ENCODE measurements at regions of chr19 and their contacts with region 1.

Region 1: DNA sequence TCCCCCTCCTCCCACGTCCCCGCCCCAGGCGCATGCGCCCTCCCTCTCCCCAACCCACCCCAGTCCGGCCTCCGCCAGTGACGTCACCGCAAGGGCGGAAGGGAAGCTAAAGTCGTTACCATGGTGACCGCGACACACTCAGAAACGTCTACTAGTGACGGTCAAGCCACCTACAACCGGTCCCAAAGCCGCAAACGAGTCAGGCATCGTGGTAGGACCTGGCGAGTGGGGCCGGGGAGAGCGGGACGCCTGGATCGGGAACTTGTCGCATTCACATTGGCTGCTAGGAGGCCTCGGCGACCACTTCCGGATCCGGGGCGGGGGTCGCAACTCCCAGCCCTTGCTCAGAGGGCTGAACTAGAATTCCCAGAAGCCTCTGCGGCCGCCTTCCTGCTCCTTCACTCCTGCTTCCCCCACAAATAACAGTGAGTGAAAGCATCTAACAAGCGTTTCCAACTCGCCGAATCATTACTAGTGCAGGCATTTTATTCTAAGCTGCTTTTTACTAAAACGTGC is at the start of gene ZSCAN5A:
- DNase-seq: peak; percentile 93 to 99 (median 99)
- ATAC-seq: peak; percentile 85
- H3K4me3 ChIP-seq: peak within 1 kb of the TSS; percentile 86
- H3K4me3 Mint-ChIP-seq: peak within 1 kb of the TSS; percentile 79 to 100 (median 96)
- H3K27ac ChIP-seq: peak within 1 kb of the TSS; percentile 97
- H3K27ac Mint-ChIP-seq: peak within 1 kb of the TSS; percentile 95 to 100 (median 99)
- H3K4me1 ChIP-seq: peaks cover 4 to 10% of the 10 kb centered on the region in 2 donors
- H3K4me1 Mint-ChIP-seq: peaks cover 13 to 41% (median 26%) of the 10 kb centered on the region in 7 donors
- H3K27me3 ChIP-seq: no peaks in the 10 kb centered on the region
- H3K27me3 Mint-ChIP-seq: no peaks in the 10 kb centered on the region
- total RNA-seq, gene ZSCAN5A: 8.0 to 15.4 (median 11.8) TPM

Region 2: GRCh38 chr19:55643348-55644176 is 671.1 kb before region 1 on chr19 and contains the start of gene ZNF581:
- CTCF ChIA-PET with region 1: no interaction called
- POLR2A ChIA-PET with region 1: no interaction called
- intact Hi-C with region 1: no loop called
- DNase-seq: peak; percentile 63 to 85 (median 81)
- ATAC-seq: peak; percentile 73
- H3K4me3 ChIP-seq: peak within 1 kb of the TSS; percentile 80
- H3K4me3 Mint-ChIP-seq: peak within 1 kb of the TSS; percentile 87 to 97 (median 94)
- H3K27ac ChIP-seq: peak within 1 kb of the TSS; percentile 80
- H3K27ac Mint-ChIP-seq: peak within 1 kb of the TSS; percentile 91 to 98 (median 96)
- H3K4me1 ChIP-seq: peaks cover 24 to 25% of the 10 kb centered on the region in 2 donors
- H3K4me1 Mint-ChIP-seq: peaks cover 23 to 63% (median 54%) of the 10 kb centered on the region in 7 donors
- H3K27me3 ChIP-seq: no peaks in the 10 kb centered on the region
- H3K27me3 Mint-ChIP-seq: no peaks in the 10 kb centered on the region
- total RNA-seq, gene ZNF581: 27.0 to 35.8 (median 32.1) TPM

Region 3: GRCh38 chr19:55653758-55654539 is 660.7 kb before region 1 on chr19:
- CTCF ChIA-PET with region 1: no interaction called
- POLR2A ChIA-PET with region 1: interaction called, 5 read pairs
- intact Hi-C with region 1: loop called in 1 of 2 experiments (anchors 10 kb)
- DNase-seq: peak; percentile 95 to 100 (median 100)
- ATAC-seq: peak; percentile 83
- H3K4me3 ChIP-seq: peak overlapping the region; percentile 98
- H3K4me3 Mint-ChIP-seq: peak overlapping the region; percentile 83 to 99 (median 96)
- H3K27ac ChIP-seq: peak overlapping the region; percentile 99
- H3K27ac Mint-ChIP-seq: peak overlapping the region; percentile 95 to 100 (median 99)
- H3K4me1 ChIP-seq: peaks cover 30 to 36% of the 10 kb centered on the region in 2 donors
- H3K4me1 Mint-ChIP-seq: peaks cover 29 to 55% (median 39%) of the 10 kb centered on the region in 7 donors
- H3K27me3 ChIP-seq: no peaks in the 10 kb centered on the region
- H3K27me3 Mint-ChIP-seq: peaks cover 0 to 2% (median 0%) of the 10 kb centered on the region in 5 donors

Region 4: DNA sequence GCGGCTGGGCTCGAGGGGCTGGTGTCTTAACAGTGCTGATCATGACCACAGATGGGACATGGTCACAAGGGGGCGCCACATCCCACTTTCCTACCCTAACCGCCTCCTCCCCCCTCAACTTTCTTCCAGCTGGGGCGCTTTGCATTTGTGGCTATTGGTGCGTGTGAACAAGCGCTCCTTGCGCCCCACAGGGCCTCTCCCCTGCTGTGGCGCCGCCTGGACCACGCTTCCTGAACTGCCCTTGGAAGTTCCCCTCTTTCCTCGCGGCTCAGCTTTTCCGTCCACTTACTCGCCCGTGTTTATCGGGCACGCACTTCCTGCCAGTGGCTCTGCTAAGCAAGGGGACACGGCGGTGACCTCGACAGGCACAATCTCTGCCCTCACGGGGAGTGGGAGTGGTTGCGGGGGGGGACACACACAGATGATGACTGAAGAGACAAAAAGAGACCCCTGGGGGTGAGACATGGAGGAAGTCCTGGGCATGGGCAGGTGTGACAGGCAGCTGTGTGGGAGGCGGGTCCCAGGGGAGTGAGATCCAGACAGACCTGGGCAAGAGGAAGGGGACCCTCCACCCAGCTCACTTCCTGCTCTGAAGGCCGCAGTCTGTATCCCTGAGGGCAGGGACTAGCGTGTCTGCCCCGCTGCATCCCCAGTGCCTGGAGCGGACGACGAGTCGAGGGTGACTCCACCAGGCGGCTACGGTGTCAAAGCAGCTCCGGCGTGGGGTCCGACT is 233.8 kb before region 1 on chr19:
- CTCF ChIA-PET with region 1: no interaction called
- POLR2A ChIA-PET with region 1: no interaction called
- intact Hi-C with region 1: loop called in 1 of 2 experiments (anchors 5 kb)
- DNase-seq: peak; percentile 22 to 69 (median 47)
- ATAC-seq: peak; percentile 81
- H3K4me3 ChIP-seq: peak overlapping the region; percentile 58
- H3K4me3 Mint-ChIP-seq: peak overlapping the region; percentile 70 to 89 (median 80)
- H3K27ac ChIP-seq: no peak overlapping the region
- H3K27ac Mint-ChIP-seq: peak overlapping the region in 1 of 9 donors; percentile 31
- H3K4me1 ChIP-seq: peaks cover 7 to 8% of the 10 kb centered on the region in 2 donors
- H3K4me1 Mint-ChIP-seq: peaks cover 8 to 11% (median 11%) of the 10 kb centered on the region in 7 donors
- H3K27me3 ChIP-seq: no peaks in the 10 kb centered on the region
- H3K27me3 Mint-ChIP-seq: peaks cover 4 to 13% (median 10%) of the 10 kb centered on the region in 5 donors

Region 5: GRCh38 chr19:56403764-56404704 is 89.4 kb after region 1 on chr19 and contains the start of gene ZNF583:
- CTCF ChIA-PET with region 1: no interaction called
- POLR2A ChIA-PET with region 1: interaction called, 5 read pairs
- intact Hi-C with region 1: loop called (anchors 1 to 2 kb)
- DNase-seq: peak; percentile 82 to 93 (median 90)
- ATAC-seq: peak; percentile 93
- H3K4me3 ChIP-seq: peak within 1 kb of the TSS; percentile 86
- H3K4me3 Mint-ChIP-seq: peak within 1 kb of the TSS; percentile 87 to 98 (median 94)
- H3K27ac ChIP-seq: peak within 1 kb of the TSS; percentile 96
- H3K27ac Mint-ChIP-seq: peak within 1 kb of the TSS; percentile 80 to 98 (median 95)
- H3K4me1 ChIP-seq: peaks cover 8 to 16% of the 10 kb centered on the region in 2 donors
- H3K4me1 Mint-ChIP-seq: peaks cover 19 to 37% (median 30%) of the 10 kb centered on the region in 7 donors
- H3K27me3 ChIP-seq: no peaks in the 10 kb centered on the region
- H3K27me3 Mint-ChIP-seq: no peaks in the 10 kb centered on the region
- total RNA-seq, gene ZNF583: 2.4 to 14.3 (median 3.1) TPM

Region 6: DNA sequence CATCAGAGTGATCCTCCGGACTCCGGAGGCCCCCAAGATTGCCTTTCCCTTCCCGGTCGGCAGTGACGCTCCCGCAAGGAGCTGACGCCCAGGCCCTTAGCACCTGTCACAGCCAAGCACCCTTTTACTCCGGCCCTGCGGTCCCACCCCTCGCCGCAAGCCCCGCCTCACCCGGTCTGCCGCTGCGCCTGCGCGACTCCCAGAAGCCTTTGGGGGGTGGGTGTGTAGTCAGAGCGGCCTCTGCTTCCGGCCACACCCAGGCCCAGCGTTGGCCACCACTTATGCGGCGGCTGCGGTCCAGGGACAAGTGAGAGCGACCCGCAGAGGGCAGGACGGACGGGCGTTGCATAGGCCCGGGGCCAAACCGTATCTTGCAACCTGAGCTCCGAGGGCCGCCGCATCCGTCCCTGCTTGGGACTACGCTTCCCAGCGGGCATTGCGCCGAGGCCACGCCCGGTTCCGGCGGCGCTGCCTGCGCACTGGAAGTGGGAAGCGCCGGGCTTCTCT is 223.7 kb after region 1 on chr19:
- CTCF ChIA-PET with region 1: no interaction called
- POLR2A ChIA-PET with region 1: no interaction called
- intact Hi-C with region 1: no loop called
- DNase-seq: peak; percentile 84 to 94 (median 89)
- ATAC-seq: peak; percentile 94
- H3K4me3 ChIP-seq: peak overlapping the region; percentile 87
- H3K4me3 Mint-ChIP-seq: peak overlapping the region; percentile 88 to 95 (median 93)
- H3K27ac ChIP-seq: peak overlapping the region; percentile 83
- H3K27ac Mint-ChIP-seq: peak overlapping the region; percentile 90 to 97 (median 94)
- H3K4me1 ChIP-seq: peaks cover 5% of the 10 kb centered on the region in 2 donors
- H3K4me1 Mint-ChIP-seq: peaks cover 13 to 27% (median 21%) of the 10 kb centered on the region in 7 donors
- H3K27me3 ChIP-seq: no peaks in the 10 kb centered on the region
- H3K27me3 Mint-ChIP-seq: peaks cover 0 to 4% (median 0%) of the 10 kb centered on the region in 5 donors

Region 7: GRCh38 chr19:57477191-57478008 is 1162.8 kb after region 1 on chr19 and contains the start of gene ZNF772:
- CTCF ChIA-PET with region 1: no interaction called
- POLR2A ChIA-PET with region 1: no interaction called
- intact Hi-C with region 1: loop called in 1 of 2 experiments (anchors 10 kb)
- DNase-seq: peak; percentile 55 to 96 (median 88)
- ATAC-seq: peak; percentile 99
- H3K4me3 ChIP-seq: peak within 1 kb of the TSS; percentile 80
- H3K4me3 Mint-ChIP-seq: peak within 1 kb of the TSS; percentile 87 to 95 (median 92)
- H3K27ac ChIP-seq: peak within 1 kb of the TSS; percentile 77
- H3K27ac Mint-ChIP-seq: peak within 1 kb of the TSS; percentile 84 to 96 (median 89)
- H3K4me1 ChIP-seq: peaks cover 5 to 12% of the 10 kb centered on the region in 2 donors
- H3K4me1 Mint-ChIP-seq: peaks cover 10 to 26% (median 19%) of the 10 kb centered on the region in 7 donors
- H3K27me3 ChIP-seq: no peaks in the 10 kb centered on the region
- H3K27me3 Mint-ChIP-seq: peaks cover 0 to 7% (median 0%) of the 10 kb centered on the region in 5 donors
- total RNA-seq, gene ZNF772: 1.5 to 20.5 (median 4.3) TPM

Measured in naive thymus-derived CD4-positive, alpha-beta T cell (primary cell).